Activated naive CD4-positive, alpha-beta T cell treated with anti-CD3 and anti-CD28 coated beads for 36 hours (primary cell): ENCODE measurements at regions of chr10 and their contacts with region 1.

Region 1: GRCh38 chr10:114876602-114877300 is 55.2 kb downstream of the FHIP2A start:
- DNase-seq: peak; percentile 74
- H3K4me3 Mint-ChIP-seq: no peak overlapping the region
- H3K27ac Mint-ChIP-seq: no peak overlapping the region
- H3K4me1 Mint-ChIP-seq: peaks cover 5% of the 10 kb centered on the region
- H3K27me3 Mint-ChIP-seq: peaks cover 36% of the 10 kb centered on the region

Region 2: DNA sequence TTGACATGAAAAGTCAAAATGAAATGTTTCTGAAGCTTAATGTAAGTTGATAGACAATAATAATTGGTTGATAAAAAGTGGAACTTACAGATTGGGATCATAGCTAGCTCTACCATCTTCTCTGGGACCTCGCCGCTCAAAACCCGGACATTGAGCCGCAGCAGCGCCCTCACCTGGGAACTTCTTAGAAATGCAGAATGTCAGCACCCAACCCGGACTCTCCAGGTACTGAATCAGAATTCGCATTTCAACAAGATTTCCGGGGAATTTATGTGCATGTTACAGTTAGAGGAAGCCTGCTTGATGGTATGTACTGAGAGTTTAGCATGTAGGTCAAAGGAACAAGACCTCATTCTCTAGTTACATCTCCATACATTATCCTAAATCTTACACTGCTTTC is 182.0 kb before region 1 on chr10:
- CTCF ChIA-PET with region 1: no interaction called
- intact Hi-C with region 1: no loop called
- DNase-seq: peak; percentile 61
- H3K4me3 Mint-ChIP-seq: no peak overlapping the region
- H3K27ac Mint-ChIP-seq: no peak overlapping the region
- H3K4me1 Mint-ChIP-seq: peaks cover 4% of the 10 kb centered on the region
- H3K27me3 Mint-ChIP-seq: peaks cover 2% of the 10 kb centered on the region

Region 3: GRCh38 chr10:114708717-114709335 is 167.9 kb before region 1 on chr10:
- CTCF ChIA-PET with region 1: no interaction called
- intact Hi-C with region 1: loop called (anchors 5 kb)
- DNase-seq: no peak
- H3K4me3 Mint-ChIP-seq: no peak overlapping the region
- H3K27ac Mint-ChIP-seq: no peak overlapping the region
- H3K4me1 Mint-ChIP-seq: no peaks in the 10 kb centered on the region
- H3K27me3 Mint-ChIP-seq: peaks cover 26% of the 10 kb centered on the region

Region 4: GRCh38 chr10:114862456-114862855 is 14.3 kb before region 1 on chr10:
- CTCF ChIA-PET with region 1: interaction called, 14 read pairs
- intact Hi-C with region 1: no loop called
- DNase-seq: no peak
- H3K4me3 Mint-ChIP-seq: no peak overlapping the region
- H3K27ac Mint-ChIP-seq: no peak overlapping the region
- H3K4me1 Mint-ChIP-seq: peaks cover 1% of the 10 kb centered on the region
- H3K27me3 Mint-ChIP-seq: no peaks in the 10 kb centered on the region

Region 5: GRCh38 chr10:114893251-114893650 is 16.5 kb after region 1 on chr10:
- CTCF ChIA-PET with region 1: interaction called, 11 read pairs
- intact Hi-C with region 1: no loop called
- DNase-seq: no peak
- H3K4me3 Mint-ChIP-seq: no peak overlapping the region
- H3K27ac Mint-ChIP-seq: no peak overlapping the region
- H3K4me1 Mint-ChIP-seq: no peaks in the 10 kb centered on the region
- H3K27me3 Mint-ChIP-seq: no peaks in the 10 kb centered on the region

Region 6: GRCh38 chr10:114937962-114938855 is 61.5 kb after region 1 on chr10 and contains the start of gene TRUB1:
- CTCF ChIA-PET with region 1: interaction called, 3 read pairs
- intact Hi-C with region 1: loop called (anchors 2 kb)
- DNase-seq: peak; percentile 97
- H3K4me3 Mint-ChIP-seq: peak within 1 kb of the TSS; percentile 95
- H3K27ac Mint-ChIP-seq: peak within 1 kb of the TSS; percentile 82
- H3K4me1 Mint-ChIP-seq: peaks cover 29% of the 10 kb centered on the region
- H3K27me3 Mint-ChIP-seq: no peaks in the 10 kb centered on the region
- total RNA-seq, gene TRUB1: 15.2 to 15.3 TPM

Region 7: DNA sequence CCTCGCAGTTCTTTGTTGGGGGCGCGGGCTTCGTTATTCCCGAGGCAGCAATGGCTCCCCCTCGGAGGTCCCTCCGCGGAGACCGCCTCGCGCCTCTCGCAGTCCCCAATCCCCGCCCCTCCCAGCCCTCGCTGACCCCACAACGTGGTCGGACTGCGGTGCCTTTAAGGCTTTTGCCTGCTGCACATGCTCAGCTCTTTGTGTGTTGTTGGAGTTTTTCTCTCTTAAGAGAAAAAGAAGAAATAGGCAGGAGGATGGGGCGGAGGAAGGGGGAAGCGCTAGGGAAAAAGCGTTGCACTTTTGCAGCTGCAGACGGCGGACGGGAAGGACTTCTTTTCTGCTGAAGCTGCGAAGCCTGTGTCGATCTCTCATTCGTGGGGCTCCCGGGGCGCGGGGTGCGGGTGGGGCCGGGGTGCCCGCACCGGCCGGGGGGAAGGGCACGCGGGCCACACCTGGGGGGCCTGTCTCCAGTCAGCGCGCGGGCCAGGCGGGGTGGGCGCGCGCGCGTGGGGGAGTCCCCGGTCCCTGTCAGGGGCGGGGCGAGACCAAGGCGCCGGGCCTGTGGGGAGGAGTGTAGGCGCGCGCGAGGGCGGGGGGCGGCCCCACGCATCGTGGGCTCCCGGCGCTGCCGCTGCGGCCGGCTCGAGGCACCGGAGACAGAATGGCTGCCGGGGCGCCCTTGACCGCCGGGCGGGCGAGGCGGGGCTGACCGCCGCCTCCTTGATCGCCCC is 216.0 kb after region 1 on chr10:
- CTCF ChIA-PET with region 1: no interaction called
- intact Hi-C with region 1: loop called (anchors 10 kb)
- DNase-seq: peak; percentile 12
- H3K4me3 Mint-ChIP-seq: peak overlapping the region; percentile 68
- H3K27ac Mint-ChIP-seq: no peak overlapping the region
- H3K4me1 Mint-ChIP-seq: peaks cover 5% of the 10 kb centered on the region
- H3K27me3 Mint-ChIP-seq: peaks cover 41% of the 10 kb centered on the region

Region 8: DNA sequence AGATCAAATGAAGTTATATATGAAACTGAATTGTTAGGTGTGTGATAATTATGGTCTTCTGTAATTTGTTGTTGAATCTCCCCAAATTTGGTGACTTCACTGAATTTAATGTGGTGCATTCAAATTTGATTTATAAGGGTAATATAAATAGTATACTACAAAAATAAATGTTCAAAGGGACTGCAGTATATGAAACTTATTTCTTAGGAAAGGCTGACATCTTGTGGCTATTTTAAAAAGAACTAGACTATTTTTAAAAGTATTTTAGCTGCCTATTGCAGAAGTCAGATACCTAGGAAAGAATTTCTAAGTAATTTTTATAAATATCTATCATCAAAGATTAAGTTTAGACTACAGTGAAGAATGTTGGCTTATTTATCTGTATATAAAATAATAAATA is 253.0 kb after region 1 on chr10:
- CTCF ChIA-PET with region 1: interaction called, 10 read pairs
- intact Hi-C with region 1: loop called (anchors 1 kb)
- DNase-seq: no peak
- H3K4me3 Mint-ChIP-seq: no peak overlapping the region
- H3K27ac Mint-ChIP-seq: no peak overlapping the region
- H3K4me1 Mint-ChIP-seq: no peaks in the 10 kb centered on the region
- H3K27me3 Mint-ChIP-seq: peaks cover 7% of the 10 kb centered on the region